ENCODE measurements at regions of chr6 and their contacts with region 1.

Region 1: GRCh38 chr6:111605100-111605751 is 452 bp downstream of the TRAF3IP2 start:
- DNase-seq: peak; percentile 82 to 96
- H3K4me3 ChIP-seq: peak overlapping the region; percentile 37
- CTCF ChIP-seq: no peak
- POLR2A ChIP-seq: no peak

Region 2: DNA sequence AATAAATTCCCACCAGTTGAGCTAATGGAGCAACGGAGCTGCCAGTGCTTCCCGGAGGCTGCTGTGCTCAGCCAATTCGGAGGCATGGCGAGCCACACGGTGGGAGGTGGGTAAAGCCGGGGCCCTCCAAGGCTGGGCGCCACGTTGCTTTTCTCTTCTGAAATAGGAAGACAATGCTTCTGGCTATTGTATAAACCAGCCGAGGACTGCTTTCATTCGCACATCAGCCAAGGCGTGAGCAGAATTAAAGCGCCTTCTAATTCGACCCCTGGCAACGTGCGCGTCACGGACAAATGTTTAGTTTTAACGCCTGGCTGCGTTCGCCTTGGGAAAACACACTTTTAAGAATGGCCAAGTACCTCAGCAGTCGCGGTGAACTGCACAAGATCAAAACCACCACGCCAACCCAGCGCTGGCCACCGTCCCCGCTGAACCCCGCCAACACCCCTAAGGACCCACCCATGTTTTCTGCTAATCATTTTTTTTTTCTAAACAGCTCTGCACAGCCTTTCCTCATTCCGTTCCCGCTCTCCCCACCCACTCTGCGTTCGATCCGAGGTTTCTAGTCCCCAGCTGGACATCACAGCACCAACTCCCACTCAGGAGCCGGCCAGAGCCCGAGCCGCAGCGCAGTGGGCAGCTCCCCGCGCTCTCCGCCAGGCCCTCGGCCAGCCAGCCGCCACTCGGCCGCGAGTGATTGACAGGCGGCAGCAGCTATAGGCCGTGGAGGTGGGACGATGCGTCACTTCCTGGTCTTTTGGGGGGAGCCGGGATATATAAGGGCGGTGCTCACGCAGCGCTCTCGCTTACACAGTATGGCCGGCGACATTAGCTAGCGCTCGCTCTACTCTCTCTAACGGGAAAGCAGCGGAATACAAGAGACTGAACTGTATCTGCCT is 731.0 kb before region 1 on chr6 and contains the start of gene AMD1:
- intact Hi-C with region 1: no loop called
- DNase-seq: peak; percentile 97 to 99
- H3K4me3 ChIP-seq: peak within 1 kb of the TSS; percentile 96
- CTCF ChIP-seq: no peak
- POLR2A ChIP-seq: peak in 1 of 2 donors; percentile 93
- total RNA-seq, gene AMD1: 36.3 to 49.8 (median 40.4) TPM

Region 3: DNA sequence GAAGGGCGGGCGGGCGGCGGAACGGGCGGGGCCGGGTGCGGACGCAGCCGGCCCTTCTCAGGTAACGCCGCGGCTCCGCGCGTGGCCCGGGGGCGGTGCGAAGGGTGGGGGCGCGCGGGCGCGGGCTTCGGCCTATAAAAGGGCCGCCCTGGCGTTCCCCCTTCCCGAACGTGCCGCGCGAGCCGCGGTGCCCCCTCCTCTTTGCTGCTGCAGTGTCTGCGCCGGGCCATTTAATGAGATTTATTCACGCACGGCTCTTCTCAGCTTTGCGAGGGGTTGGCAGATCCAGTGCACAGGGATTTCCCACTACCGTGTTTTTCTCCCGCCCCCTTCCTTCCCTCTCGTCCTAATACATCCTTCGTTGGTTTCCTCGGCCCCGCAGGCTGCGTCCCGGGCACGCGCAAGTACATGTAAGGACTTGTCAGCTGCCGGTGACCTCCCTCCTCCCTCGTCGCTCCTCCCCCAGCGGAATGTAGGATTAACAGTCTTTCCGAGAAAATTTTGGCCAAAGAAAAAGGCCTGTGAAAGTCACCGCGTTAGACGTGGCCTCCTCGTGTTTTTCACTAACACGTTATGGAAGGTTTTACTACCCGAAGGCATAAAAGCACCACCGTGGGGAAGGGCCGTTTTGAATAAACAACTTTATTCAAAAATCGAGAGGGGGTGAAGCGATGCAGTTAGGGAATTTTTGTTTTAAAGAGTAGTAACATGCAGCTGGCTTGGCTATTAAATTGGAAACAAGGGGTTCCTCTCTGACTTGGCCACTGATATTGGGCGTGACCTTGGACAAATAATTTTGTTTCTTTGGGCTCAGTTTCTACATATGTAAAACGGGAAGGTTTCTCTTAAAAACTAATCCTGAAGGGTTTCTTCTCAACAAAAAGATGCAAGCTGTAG is 121.2 kb before region 1 on chr6:
- intact Hi-C with region 1: loop called (anchors 10 kb)
- DNase-seq: peak; percentile 95 to 98
- H3K4me3 ChIP-seq: peak overlapping the region; percentile 99
- CTCF ChIP-seq: no peak
- POLR2A ChIP-seq: peak in 1 of 2 donors; percentile 26